ENCODE measurements at regions of chr3 and their contacts with region 1.

Region 1: GRCh38 chr3:86793786-86794185 is 197.2 kb downstream of the VGLL3 start:
- DNase-seq: peak; percentile 86
- H3K4me3 ChIP-seq: no peak overlapping the region
- H3K27ac ChIP-seq: peak overlapping the region; percentile 78
- H3K4me1 ChIP-seq: peaks cover 13% of the 10 kb centered on the region
- H3K27me3 ChIP-seq: no peaks in the 10 kb centered on the region
- CTCF ChIP-seq: no peak

Region 2: GRCh38 chr3:86723433-86723832 is 70.4 kb before region 1 on chr3:
- CTCF ChIA-PET with region 1: no interaction called
- dilution Hi-C with region 1: no loop called
- in situ Hi-C with region 1: no loop called
- intact Hi-C with region 1: no loop called
- DNase-seq: peak; percentile 25
- H3K4me3 ChIP-seq: no peak overlapping the region
- H3K27ac ChIP-seq: no peak overlapping the region
- H3K4me1 ChIP-seq: no peaks in the 10 kb centered on the region
- H3K27me3 ChIP-seq: no peaks in the 10 kb centered on the region
- CTCF ChIP-seq: no peak

Region 3: GRCh38 chr3:86856711-86857110 is 62.9 kb after region 1 on chr3:
- CTCF ChIA-PET with region 1: no interaction called
- dilution Hi-C with region 1: no loop called
- in situ Hi-C with region 1: no loop called
- intact Hi-C with region 1: loop called (anchors 5 kb)
- DNase-seq: no peak
- H3K4me3 ChIP-seq: no peak overlapping the region
- H3K27ac ChIP-seq: no peak overlapping the region
- H3K4me1 ChIP-seq: no peaks in the 10 kb centered on the region
- H3K27me3 ChIP-seq: no peaks in the 10 kb centered on the region
- CTCF ChIP-seq: no peak